ENCODE measurements at regions of chr7 and their contacts with region 1.

Region 1: GRCh38 chr7:129367700-129368388 is 66.4 kb upstream of the STRIP2 start:
- DNase-seq: no peak
- H3K4me3 ChIP-seq: no peak overlapping the region
- CTCF ChIP-seq: peak; percentile 85

Region 2: GRCh38 chr7:129224251-129225205 is 143.3 kb before region 1 on chr7 and contains the start of gene AHCYL2:
- CTCF ChIA-PET with region 1: interaction called, 16 read pairs
- POLR2A ChIA-PET with region 1: no interaction called
- DNase-seq: peak; percentile 71
- H3K4me3 ChIP-seq: peak within 1 kb of the TSS; percentile 78
- CTCF ChIP-seq: no peak

Region 3: DNA sequence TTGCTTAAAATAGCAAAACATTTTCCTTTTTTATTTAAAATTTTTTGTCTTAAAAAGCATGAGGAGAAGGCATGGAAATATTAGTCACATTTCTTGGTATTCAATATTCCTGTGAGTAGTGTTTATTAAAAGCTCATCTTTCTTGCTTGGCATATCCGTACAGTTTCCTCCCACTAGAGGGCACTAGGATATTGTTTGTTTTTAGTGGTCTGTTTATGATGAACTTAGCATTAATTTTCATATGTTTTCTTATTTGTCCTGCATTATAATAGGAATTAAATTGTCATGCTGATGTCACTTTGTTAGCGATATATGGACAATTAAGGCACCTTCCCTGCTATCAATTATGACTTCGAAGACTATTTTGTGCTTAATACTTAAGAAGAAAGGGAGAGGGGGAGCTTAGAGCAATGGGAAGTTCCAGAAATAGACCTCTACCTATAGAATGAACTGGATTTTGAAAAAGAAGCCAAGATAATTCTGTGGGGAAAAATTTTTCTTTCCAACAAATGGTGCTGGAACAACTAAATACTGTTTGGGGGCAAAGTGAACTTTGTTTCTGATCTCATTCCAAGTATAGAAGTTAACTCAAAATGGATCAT is 24.6 kb before region 1 on chr7:
- CTCF ChIA-PET with region 1: interaction called, 45 read pairs
- POLR2A ChIA-PET with region 1: no interaction called
- DNase-seq: no peak
- H3K4me3 ChIP-seq: no peak overlapping the region
- CTCF ChIP-seq: peak; percentile 48

Region 4: DNA sequence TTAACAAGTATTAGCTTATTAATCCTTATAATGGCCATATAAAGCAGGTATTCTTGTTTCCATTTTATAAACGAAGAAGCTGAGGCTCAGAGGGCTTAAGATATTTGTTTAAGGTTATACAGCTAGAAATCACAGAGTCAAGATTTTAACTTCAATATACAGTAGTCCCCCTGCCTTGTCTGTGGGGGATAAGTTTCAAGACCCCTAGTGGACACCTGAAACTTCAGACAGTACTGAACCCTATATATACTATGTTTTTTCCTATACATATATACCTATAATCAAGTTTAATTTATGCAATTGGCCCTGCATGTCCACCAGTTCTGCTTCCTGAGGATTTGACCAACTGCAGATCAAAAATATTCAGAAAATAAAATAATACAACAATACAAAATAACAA is 22.0 kb after region 1 on chr7:
- CTCF ChIA-PET with region 1: interaction called, 38 read pairs
- POLR2A ChIA-PET with region 1: no interaction called
- DNase-seq: no peak
- H3K4me3 ChIP-seq: no peak overlapping the region
- CTCF ChIP-seq: no peak

Region 5: GRCh38 chr7:129468087-129468486 is 100.2 kb after region 1 on chr7:
- CTCF ChIA-PET with region 1: interaction called, 504 read pairs
- POLR2A ChIA-PET with region 1: interaction called, 4 read pairs
- DNase-seq: peak; percentile 57
- H3K4me3 ChIP-seq: no peak overlapping the region
- CTCF ChIP-seq: no peak

Region 6: GRCh38 chr7:129635300-129636029 is 267.6 kb after region 1 on chr7:
- CTCF ChIA-PET with region 1: interaction called, 11 read pairs
- POLR2A ChIA-PET with region 1: no interaction called
- DNase-seq: no peak
- H3K4me3 ChIP-seq: no peak overlapping the region
- CTCF ChIP-seq: peak; percentile 88